CD4-positive, alpha-beta T cell (primary cell): ENCODE measurements at regions of chr15 and their contacts with region 1.

Region 1: GRCh38 chr15:90071208-90071807 is 31.0 kb downstream of the IDH2 start:
- DNase-seq: peak; percentile 65 to 89 (median 79)
- ATAC-seq: peak; percentile 98
- H3K4me3 ChIP-seq: no peak overlapping the region
- H3K4me3 Mint-ChIP-seq: no peak overlapping the region
- H3K27ac ChIP-seq: no peak overlapping the region
- H3K27ac Mint-ChIP-seq: peak overlapping the region; percentile 69
- H3K4me1 ChIP-seq: peaks cover 9% of the 10 kb centered on the region
- H3K4me1 Mint-ChIP-seq: peaks cover 6% of the 10 kb centered on the region
- H3K27me3 ChIP-seq: no peaks in the 10 kb centered on the region
- H3K27me3 Mint-ChIP-seq: no peaks in the 10 kb centered on the region
- CTCF ChIP-seq: peak; percentile 83

Region 2: GRCh38 chr15:90001683-90002427 is 69.5 kb before region 1 on chr15:
- CTCF ChIA-PET with region 1: no interaction called
- POLR2A ChIA-PET with region 1: interaction called, 4 read pairs
- intact Hi-C with region 1: loop called (anchors 5 kb)
- DNase-seq: peak; percentile 29 to 85 (median 54)
- ATAC-seq: peak; percentile 64
- H3K4me3 ChIP-seq: peak overlapping the region; percentile 60
- H3K4me3 Mint-ChIP-seq: peak overlapping the region; percentile 88
- H3K27ac ChIP-seq: no peak overlapping the region
- H3K27ac Mint-ChIP-seq: peak overlapping the region; percentile 97
- H3K4me1 ChIP-seq: peaks cover 54% of the 10 kb centered on the region
- H3K4me1 Mint-ChIP-seq: peaks cover 51% of the 10 kb centered on the region
- H3K27me3 ChIP-seq: no peaks in the 10 kb centered on the region
- H3K27me3 Mint-ChIP-seq: peaks cover 5% of the 10 kb centered on the region
- CTCF ChIP-seq: no peak

Region 3: GRCh38 chr15:90086868-90087268 is 15.6 kb after region 1 on chr15:
- CTCF ChIA-PET with region 1: interaction called, 6 read pairs
- POLR2A ChIA-PET with region 1: no interaction called
- intact Hi-C with region 1: loop called in 1 of 2 experiments (anchors 2 kb)
- DNase-seq: peak in 13 of 14 experiments; percentile 23 to 71 (median 47)
- ATAC-seq: peak; percentile 85
- H3K4me3 ChIP-seq: no peak overlapping the region
- H3K4me3 Mint-ChIP-seq: no peak overlapping the region
- H3K27ac ChIP-seq: no peak overlapping the region
- H3K27ac Mint-ChIP-seq: peak overlapping the region; percentile 59
- H3K4me1 ChIP-seq: peaks cover 11% of the 10 kb centered on the region
- H3K4me1 Mint-ChIP-seq: peaks cover 9% of the 10 kb centered on the region
- H3K27me3 ChIP-seq: no peaks in the 10 kb centered on the region
- H3K27me3 Mint-ChIP-seq: no peaks in the 10 kb centered on the region
- CTCF ChIP-seq: peak; percentile 66

Region 4: GRCh38 chr15:90184786-90185569 is 113.7 kb after region 1 on chr15:
- CTCF ChIA-PET with region 1: no interaction called
- POLR2A ChIA-PET with region 1: no interaction called
- intact Hi-C with region 1: no loop called
- DNase-seq: peak; percentile 24 to 79 (median 52)
- ATAC-seq: peak; percentile 84
- H3K4me3 ChIP-seq: peak overlapping the region; percentile 63
- H3K4me3 Mint-ChIP-seq: peak overlapping the region; percentile 81
- H3K27ac ChIP-seq: no peak overlapping the region
- H3K27ac Mint-ChIP-seq: peak overlapping the region; percentile 7
- H3K4me1 ChIP-seq: peaks cover 17% of the 10 kb centered on the region
- H3K4me1 Mint-ChIP-seq: peaks cover 13% of the 10 kb centered on the region
- H3K27me3 ChIP-seq: no peaks in the 10 kb centered on the region
- H3K27me3 Mint-ChIP-seq: no peaks in the 10 kb centered on the region
- CTCF ChIP-seq: no peak

Region 5: GRCh38 chr15:90219421-90220166 is 148.3 kb after region 1 on chr15:
- CTCF ChIA-PET with region 1: no interaction called
- POLR2A ChIA-PET with region 1: no interaction called
- intact Hi-C with region 1: no loop called
- DNase-seq: peak; percentile 37 to 78 (median 52)
- ATAC-seq: peak; percentile 89
- H3K4me3 ChIP-seq: no peak overlapping the region
- H3K4me3 Mint-ChIP-seq: no peak overlapping the region
- H3K27ac ChIP-seq: no peak overlapping the region
- H3K27ac Mint-ChIP-seq: no peak overlapping the region
- H3K4me1 ChIP-seq: peaks cover 6% of the 10 kb centered on the region
- H3K4me1 Mint-ChIP-seq: peaks cover 13% of the 10 kb centered on the region
- H3K27me3 ChIP-seq: no peaks in the 10 kb centered on the region
- H3K27me3 Mint-ChIP-seq: no peaks in the 10 kb centered on the region
- CTCF ChIP-seq: peak; percentile 75